ENCODE measurements at regions of chr7 and their contacts with region 1.

Region 1: GRCh38 chr7:137474540-137475026 is 131.1 kb upstream of the PTN start:
- DNase-seq: no peak

Region 2: DNA sequence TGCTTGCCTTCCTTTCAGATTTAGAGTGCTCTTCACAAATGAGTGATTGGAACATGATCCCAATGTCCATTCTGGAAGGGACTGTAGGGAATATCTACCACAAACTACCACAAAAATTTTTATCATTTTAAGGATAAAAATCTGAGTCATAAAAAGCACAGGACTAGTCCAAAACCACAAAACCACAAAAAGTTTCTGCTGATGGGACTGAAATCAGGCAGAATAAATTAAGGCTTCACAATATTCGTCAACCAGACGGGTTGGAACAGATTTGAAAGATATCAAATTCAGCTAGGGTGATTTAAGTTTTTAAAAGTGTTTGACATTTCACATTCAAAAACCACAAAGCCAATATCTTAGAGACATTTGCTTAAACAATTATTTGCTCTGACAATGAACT is 31.0 kb before region 1 on chr7:
- intact Hi-C with region 1: no loop called
- DNase-seq: no peak

Region 3: DNA sequence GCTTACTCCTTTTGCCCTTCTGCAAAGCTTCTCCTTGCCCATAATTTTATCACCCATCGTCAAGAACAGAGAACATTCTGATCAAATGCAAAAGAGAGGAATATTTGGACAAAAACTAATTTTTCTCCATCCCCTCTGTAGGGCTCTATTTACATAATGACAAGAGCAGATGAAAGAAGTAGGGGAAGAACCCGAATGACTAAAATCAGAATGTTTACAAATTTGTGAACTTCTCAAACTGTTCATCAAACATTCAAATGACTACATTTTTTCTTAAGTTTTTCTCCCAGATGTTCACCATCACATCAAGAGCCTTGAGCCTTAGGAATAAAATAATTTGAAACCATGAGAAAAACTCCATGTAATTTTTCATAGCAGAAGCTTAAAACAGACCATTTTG is 252.8 kb after region 1 on chr7:
- intact Hi-C with region 1: no loop called
- DNase-seq: no peak

Region 4: GRCh38 chr7:138898255-138898654 is 1423.7 kb after region 1 on chr7:
- intact Hi-C with region 1: loop called in 1 of 2 experiments (anchors 5 kb)
- DNase-seq: no peak

Measured in posterior vena cava (tissue), 2 donors.